ENCODE measurements at regions of chr5 and their contacts with region 1.

Region 1: GRCh38 chr5:170809551-170809950 is 26.0 kb downstream of the GABRP start:
- DNase-seq: no peak
- H3K4me3 ChIP-seq: no peak overlapping the region
- CTCF ChIP-seq: peak; percentile 54

Region 2: GRCh38 chr5:170917113-170917512 is 107.6 kb after region 1 on chr5:
- CTCF ChIA-PET with region 1: interaction called, 19 read pairs
- POLR2A ChIA-PET with region 1: no interaction called
- DNase-seq: no peak
- H3K4me3 ChIP-seq: no peak overlapping the region
- CTCF ChIP-seq: no peak